Right ventricle myocardium inferior (tissue), 1 donor: ENCODE measurements at regions of chr19 and their contacts with region 1.

Region 1: DNA sequence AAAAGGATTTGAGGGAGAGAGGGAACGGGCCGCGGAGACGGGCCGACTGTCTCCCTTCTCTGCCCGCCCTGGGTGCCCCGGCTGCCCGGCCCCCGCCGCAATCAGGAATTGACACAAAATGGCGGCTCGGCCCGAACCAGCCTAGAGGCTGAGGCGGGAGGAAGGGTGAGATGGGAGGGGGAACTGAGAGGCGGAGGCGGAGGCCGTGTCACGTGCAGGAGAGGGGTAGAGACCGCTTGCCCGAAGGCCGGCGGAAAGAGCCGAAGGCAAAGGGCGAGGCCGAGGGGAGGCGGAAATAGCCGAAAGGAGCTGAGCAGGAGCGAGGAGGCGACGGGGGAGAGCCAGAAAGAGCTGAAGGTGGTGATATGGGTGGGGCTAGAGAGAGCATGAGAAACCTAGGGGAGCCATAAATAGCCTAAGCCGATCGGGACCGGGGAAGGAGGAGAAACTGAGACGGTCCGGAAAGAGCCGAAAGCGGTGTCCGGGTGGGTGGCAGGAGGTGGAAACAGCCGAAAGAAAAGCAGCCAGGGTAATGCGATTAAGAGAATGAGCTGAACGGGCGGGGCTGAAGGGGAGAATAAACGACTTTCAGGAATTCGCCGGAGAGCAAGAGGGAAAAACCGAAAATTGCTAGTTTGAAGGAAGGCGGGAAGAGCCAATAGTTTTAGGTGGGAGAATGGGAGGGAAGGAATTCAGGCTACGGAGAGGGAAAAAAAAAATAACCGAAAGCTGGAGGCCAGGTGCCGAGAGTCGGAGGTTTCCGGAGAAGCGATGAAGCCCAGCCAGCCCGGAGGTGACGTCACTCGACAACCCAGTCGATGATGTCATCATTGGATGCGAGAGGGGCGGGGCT is at the start of gene ZC3H4:
- DNase-seq: peak; percentile 99
- ATAC-seq: peak; percentile 96
- total RNA-seq, gene ZC3H4: 20.5 TPM

Region 2: DNA sequence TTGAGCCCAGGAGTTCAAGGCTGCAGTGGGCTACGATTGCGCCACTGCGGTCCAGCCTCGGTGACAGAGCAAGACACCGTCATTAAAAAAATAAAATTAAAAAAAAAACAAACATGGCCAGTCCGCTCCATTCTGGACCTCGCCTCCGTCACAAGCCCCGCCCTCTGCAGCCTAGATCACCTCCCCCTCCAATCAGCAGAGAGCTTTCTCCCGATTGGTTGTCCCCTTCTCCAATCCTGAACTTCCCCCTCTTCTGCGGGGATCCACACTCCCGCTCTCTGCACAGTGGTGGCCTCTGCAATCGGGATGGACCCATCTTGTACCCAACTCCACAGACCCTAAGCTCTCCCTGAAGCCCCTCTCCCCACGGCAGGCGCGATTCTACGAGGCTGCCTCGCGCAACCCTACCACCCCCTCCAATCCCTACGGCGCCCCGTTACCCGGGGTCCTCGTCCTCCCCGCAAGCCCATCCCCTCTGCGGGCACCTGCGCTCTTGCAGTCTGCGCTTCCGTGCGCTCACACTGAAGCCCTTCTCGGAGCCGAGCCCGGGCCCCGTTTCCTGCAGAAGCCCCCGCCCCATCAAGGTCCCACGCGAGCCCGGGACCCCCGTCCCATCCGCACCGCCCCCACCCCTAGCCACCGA is 65.3 kb before region 1 on chr19:
- intact Hi-C with region 1: loop called (anchors 5 kb)
- DNase-seq: peak; percentile 88
- ATAC-seq: peak; percentile 88

Region 3: GRCh38 chr19:47075179-47075810 is 37.9 kb before region 1 on chr19:
- intact Hi-C with region 1: loop called (anchors 5 kb)
- DNase-seq: peak; percentile 85
- ATAC-seq: no peak

Region 4: GRCh38 chr19:47089767-47090350 is 23.4 kb before region 1 on chr19:
- intact Hi-C with region 1: no loop called
- DNase-seq: no peak
- ATAC-seq: no peak

Region 5: DNA sequence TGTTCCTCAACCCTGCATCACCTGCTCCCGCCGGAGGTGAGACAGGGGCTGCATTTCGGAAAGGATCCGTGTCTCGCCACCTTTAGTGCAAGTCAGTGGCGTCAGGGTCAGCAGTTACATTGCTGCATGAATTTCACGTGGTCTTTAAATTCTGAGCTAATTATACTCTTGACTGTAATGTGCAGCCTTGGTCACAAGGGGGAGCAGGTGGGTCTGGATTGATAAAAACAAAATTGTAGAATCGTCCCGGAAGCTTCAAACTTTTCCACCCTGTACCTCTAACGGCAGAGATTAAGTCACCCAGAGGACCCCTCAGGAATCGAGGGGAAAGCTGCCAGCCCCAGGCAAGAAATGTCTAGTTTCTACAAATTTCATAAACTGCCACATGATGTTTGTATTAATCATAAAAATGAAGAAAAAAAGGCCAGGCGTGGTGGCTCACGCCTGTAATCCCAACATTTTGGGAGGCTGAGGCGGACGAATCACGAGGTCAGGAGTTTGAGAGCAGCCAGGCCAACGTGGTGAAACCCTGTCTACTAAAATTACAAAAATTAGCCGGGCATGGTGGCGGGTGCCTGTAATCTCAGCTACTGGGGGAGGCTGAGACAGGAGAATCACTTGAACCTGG is 97.6 kb after region 1 on chr19:
- intact Hi-C with region 1: no loop called
- DNase-seq: peak; percentile 73
- ATAC-seq: peak; percentile 68